HAP-1 (cell line): ENCODE measurements at regions of chr14 and their contacts with region 1.

Region 1: GRCh38 chr14:99884834-99885648 is 91.8 kb downstream of the EML1 start:
- DNase-seq: peak; percentile 41 to 44
- H3K4me3 ChIP-seq: no peak overlapping the region
- H3K4me1 ChIP-seq: peaks cover 11% of the 10 kb centered on the region
- H3K27me3 ChIP-seq: no peaks in the 10 kb centered on the region

Region 2: DNA sequence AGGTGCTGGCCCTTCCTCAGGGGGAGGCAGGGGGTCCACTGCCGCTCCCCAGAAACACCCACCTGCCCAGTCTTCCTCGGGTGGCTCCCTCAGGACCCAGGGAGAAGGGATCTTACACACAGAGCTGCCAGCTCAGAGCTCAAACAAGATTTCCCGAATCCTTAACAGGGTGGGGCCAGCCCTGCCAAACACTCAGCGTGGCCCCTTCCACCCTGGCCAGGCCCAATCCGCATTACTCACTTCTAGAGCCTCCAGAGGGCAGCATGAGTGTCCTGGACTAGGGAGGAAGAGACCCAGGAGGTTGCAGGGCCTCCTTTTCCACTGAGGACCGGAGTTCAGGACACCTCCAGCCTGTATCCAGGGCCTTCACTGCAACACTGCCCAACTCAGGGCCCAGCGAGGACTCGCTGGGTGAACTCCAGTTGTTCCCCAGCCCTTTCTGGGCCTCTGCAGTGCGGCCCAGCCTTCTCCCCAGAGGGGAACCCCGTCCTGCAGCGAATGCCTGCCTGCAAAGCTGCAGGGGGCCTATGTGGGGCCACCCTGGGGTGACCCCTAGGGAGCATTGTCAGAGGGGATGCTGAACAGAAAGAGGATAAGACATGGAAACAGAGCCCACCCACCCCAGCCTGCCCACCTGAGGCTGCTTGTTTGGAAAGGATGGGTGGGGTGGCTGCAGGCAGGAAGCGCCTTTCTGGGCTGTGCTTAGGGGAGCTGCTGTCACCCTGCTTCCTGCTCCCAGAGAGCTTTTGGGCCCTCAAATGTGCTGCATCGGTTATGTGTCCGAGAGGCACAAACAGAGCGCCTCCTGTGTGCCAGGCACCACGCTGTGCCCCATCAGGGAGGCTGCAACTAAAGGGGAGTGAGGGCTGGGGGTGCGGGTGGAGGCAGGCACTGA is 360.0 kb before region 1 on chr14:
- in situ Hi-C with region 1: loop called (anchors 10 kb)
- DNase-seq: peak; percentile 35 to 73
- H3K4me3 ChIP-seq: no peak overlapping the region
- H3K4me1 ChIP-seq: peaks cover 29% of the 10 kb centered on the region
- H3K27me3 ChIP-seq: no peaks in the 10 kb centered on the region

Region 3: DNA sequence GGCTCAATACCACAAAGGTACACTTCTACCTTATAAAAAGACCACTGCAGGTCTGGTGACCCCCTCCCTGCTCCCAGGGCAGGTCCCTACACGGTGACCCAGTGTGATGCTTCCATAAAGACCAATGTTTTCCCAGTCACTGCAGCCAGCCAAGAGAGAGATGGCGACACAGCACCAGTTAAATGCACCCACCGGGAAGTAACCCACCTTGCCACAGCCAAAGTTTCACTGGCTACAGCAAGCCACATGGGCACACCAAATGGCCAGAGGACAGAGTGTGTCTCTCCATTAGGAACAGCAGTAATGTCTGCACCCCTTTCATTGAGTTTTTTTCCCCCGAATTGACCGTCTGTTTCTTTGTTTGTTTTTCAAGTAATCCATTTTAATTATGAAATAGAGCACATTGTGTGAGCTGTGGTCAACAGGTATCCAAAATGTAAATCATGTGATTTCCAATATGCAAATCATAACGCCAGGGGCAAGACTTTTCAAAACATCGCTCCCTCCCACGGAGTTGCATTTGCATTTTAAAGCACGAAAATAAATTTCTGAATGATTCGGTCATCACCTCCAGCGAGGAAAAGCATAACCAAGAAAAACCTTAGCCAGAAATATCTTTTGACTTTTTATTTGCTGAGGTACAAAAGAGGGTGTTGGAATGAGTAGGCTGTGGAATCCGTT is 140.7 kb before region 1 on chr14:
- in situ Hi-C with region 1: loop called (anchors 5 kb)
- DNase-seq: peak; percentile 69 to 86
- H3K4me3 ChIP-seq: no peak overlapping the region
- H3K4me1 ChIP-seq: peaks cover 17% of the 10 kb centered on the region
- H3K27me3 ChIP-seq: no peaks in the 10 kb centered on the region

Region 4: DNA sequence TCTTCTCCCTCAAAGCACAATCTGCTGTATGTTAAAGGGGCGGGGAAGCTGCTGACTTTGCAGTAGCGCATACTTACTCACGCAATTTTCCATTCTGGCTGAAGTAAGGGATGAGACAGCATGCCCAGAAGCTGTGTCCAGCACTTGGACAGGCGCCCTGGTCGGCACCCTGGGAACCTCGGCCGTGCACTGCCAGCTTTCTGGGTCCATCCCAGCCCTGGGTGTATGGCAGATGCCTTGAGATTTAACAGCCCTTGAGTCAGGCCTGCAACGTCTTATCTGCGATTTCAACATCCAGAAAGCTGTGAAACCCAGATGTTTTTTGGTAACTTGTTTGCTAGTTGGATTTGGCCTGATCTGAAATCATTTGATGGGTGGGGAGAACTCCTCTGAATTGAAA is 75.7 kb before region 1 on chr14:
- in situ Hi-C with region 1: no loop called
- DNase-seq: no peak
- H3K4me3 ChIP-seq: no peak overlapping the region
- H3K4me1 ChIP-seq: no peaks in the 10 kb centered on the region; the same call in 1 of the 2 replicates
- H3K27me3 ChIP-seq: no peaks in the 10 kb centered on the region

Region 5: DNA sequence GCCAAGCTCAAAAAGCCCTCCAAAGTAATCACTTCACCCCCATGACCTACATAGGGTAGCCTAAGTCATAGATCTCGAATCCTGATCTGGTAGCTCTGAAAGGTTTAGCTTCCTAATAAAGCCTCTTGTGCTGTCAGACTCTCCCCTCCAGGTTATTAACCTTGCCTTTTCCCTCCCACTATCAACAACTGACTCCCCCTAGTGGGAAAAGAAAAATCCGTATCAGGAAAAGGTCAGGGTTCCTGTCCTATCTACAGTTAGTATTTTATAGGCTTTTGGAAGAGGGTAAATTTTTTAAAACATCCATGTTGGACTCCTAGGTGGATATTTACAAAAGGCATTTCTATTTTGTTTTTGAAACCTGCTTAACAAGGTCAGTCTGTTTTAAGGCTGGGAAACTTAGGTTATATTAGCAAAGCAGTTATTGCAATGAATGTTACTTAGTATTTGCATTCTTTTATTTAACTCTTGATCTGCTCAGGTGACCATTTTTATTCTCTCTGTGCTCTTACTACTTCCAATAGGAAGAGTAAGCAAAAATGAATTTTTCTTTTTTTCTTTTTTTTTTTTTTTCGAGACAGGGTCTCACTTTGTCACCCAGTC is 361.9 kb after region 1 on chr14:
- in situ Hi-C with region 1: no loop called
- DNase-seq: peak; percentile 65 to 89
- H3K4me3 ChIP-seq: no peak overlapping the region
- H3K4me1 ChIP-seq: peaks cover 28% of the 10 kb centered on the region
- H3K27me3 ChIP-seq: no peaks in the 10 kb centered on the region